Dendritic cell treated with granulocyte-macrophage colony-stimulating factor and Interleukin-4, amounts not matched to agents 40 ng/mL and 50 ng/mL, for 4 days (primary cell): ENCODE measurements at regions of chr7 and their contacts with region 1.

Region 1: GRCh38 chr7:101094416-101095375 is 9.4 kb downstream of the TRIM56 start:
- H3K4me3 Mint-ChIP-seq: no peak overlapping the region
- H3K27ac Mint-ChIP-seq: no peak overlapping the region
- H3K4me1 Mint-ChIP-seq: peaks cover 45% of the 10 kb centered on the region
- H3K27me3 Mint-ChIP-seq: peaks cover 10% of the 10 kb centered on the region

Region 2: GRCh38 chr7:100911467-100911866 is 183.2 kb before region 1 on chr7:
- intact Hi-C with region 1: no loop called
- H3K4me3 Mint-ChIP-seq: no peak overlapping the region
- H3K27ac Mint-ChIP-seq: peak overlapping the region; percentile 78
- H3K4me1 Mint-ChIP-seq: peaks cover 35% of the 10 kb centered on the region
- H3K27me3 Mint-ChIP-seq: peaks cover 3% of the 10 kb centered on the region

Region 3: GRCh38 chr7:101138213-101138870 is 43.6 kb after region 1 on chr7:
- intact Hi-C with region 1: loop called (anchors 1 kb)
- H3K4me3 Mint-ChIP-seq: peak overlapping the region; percentile 37
- H3K27ac Mint-ChIP-seq: peak overlapping the region; percentile 65
- H3K4me1 Mint-ChIP-seq: peaks cover 67% of the 10 kb centered on the region
- H3K27me3 Mint-ChIP-seq: peaks cover 7% of the 10 kb centered on the region

Region 4: DNA sequence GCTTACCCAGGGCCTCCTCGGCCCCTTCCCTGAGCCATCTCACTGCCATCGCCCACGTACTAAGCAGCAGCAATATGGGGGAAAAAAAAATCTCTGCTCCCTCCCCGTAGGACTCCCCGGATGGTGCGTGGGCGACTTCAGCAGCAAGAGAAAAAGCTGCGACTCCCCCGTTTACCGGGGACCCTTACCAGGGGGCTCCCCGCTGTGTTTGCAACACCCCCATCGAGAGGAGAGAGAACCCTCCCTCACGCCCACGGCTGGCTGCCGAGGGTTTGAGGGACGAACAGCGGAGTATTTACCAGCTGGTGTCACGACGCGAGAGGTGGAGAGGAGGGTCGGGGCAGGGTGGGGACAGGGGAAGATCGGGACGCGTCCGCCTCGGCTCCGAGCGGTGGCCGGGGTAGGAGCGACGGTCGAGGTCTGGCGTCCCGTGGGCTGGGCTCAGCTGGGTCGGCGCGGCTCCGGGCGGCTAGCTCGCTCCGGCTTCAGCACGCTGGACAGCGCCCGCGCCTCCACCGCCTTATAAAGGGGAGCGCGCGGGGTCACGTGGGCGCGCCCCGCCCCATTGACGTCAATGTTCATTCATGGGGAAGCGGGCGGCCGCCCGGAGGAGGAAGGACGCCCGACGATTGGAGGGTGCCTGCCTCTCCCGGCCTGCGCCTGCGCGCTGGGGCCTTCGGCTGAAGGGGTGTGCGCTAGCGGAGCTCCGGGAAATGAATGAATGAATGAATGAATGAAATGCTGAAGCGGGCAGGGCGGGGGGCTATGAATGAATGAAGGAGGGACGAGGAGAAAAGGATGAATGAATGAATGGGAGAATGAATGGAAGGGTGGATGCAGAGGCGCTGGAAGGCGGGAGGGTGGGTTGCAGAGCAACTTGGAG is 70.6 kb after region 1 on chr7 and contains the start of gene VGF:
- intact Hi-C with region 1: no loop called
- H3K4me3 Mint-ChIP-seq: peak within 1 kb of the TSS; percentile 74
- H3K27ac Mint-ChIP-seq: peak within 1 kb of the TSS; percentile 7
- H3K4me1 Mint-ChIP-seq: peaks cover 52% of the 10 kb centered on the region
- H3K27me3 Mint-ChIP-seq: peaks cover 91% of the 10 kb centered on the region